Right lobe of liver (tissue), 6 donors: ENCODE measurements at regions of chr15 and their contacts with region 1.

Region 1: GRCh38 chr15:67850995-67851571 is 11.2 kb upstream of the RNU6-1 start:
- DNase-seq: peak in 1 of 3 donors; percentile 43
- ATAC-seq: peak in 3 of 4 donors; percentile 59 to 90 (median 66)
- H3K4me3 ChIP-seq: no peak overlapping the region
- H3K27ac ChIP-seq: no peak overlapping the region
- H3K4me1 ChIP-seq: no peaks in the 10 kb centered on the region
- H3K27me3 ChIP-seq: no peaks in the 10 kb centered on the region
- CTCF ChIP-seq: no peak
- POLR2A ChIP-seq: no peak

Region 2: DNA sequence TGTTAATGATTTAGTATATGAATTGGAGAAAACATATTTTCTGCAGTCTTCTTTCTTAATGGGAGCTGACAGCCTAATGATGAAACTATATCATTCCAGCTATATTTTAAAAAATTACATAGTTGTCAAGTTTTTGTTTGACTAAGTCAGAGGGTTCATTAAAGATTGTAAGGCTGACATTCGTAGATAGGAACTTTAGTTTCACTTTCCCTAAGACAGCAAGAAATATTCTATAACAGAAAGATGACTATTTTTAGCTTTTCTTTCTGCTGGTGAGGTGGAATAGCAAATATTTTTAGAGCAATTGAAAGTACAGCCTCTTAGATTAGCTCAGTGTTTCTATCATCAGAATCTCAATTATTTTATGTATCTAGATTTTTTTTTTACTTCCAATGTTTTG is 263.3 kb after region 1 on chr15:
- intact Hi-C with region 1: no loop called
- DNase-seq: no peak
- ATAC-seq: peak; percentile 42 to 69 (median 59)
- H3K4me3 ChIP-seq: peak overlapping the region; percentile 13 to 43 (median 39)
- H3K27ac ChIP-seq: peak overlapping the region in 2 of 3 donors; percentile 59
- H3K4me1 ChIP-seq: peaks cover 0 to 18% (median 1%) of the 10 kb centered on the region in 4 donors
- H3K27me3 ChIP-seq: no peaks in the 10 kb centered on the region
- CTCF ChIP-seq: no peak
- POLR2A ChIP-seq: no peak

Region 3: GRCh38 chr15:68154923-68155559 is 304.0 kb after region 1 on chr15:
- intact Hi-C with region 1: loop called in 1 of 2 experiments (anchors 10 kb)
- DNase-seq: no peak
- ATAC-seq: peak; percentile 80 to 87 (median 82)
- H3K4me3 ChIP-seq: no peak overlapping the region
- H3K27ac ChIP-seq: no peak overlapping the region
- H3K4me1 ChIP-seq: peaks cover 0 to 5% (median 0%) of the 10 kb centered on the region in 4 donors
- H3K27me3 ChIP-seq: no peaks in the 10 kb centered on the region
- CTCF ChIP-seq: peak; percentile 75 to 88 (median 81)
- POLR2A ChIP-seq: no peak

Region 4: DNA sequence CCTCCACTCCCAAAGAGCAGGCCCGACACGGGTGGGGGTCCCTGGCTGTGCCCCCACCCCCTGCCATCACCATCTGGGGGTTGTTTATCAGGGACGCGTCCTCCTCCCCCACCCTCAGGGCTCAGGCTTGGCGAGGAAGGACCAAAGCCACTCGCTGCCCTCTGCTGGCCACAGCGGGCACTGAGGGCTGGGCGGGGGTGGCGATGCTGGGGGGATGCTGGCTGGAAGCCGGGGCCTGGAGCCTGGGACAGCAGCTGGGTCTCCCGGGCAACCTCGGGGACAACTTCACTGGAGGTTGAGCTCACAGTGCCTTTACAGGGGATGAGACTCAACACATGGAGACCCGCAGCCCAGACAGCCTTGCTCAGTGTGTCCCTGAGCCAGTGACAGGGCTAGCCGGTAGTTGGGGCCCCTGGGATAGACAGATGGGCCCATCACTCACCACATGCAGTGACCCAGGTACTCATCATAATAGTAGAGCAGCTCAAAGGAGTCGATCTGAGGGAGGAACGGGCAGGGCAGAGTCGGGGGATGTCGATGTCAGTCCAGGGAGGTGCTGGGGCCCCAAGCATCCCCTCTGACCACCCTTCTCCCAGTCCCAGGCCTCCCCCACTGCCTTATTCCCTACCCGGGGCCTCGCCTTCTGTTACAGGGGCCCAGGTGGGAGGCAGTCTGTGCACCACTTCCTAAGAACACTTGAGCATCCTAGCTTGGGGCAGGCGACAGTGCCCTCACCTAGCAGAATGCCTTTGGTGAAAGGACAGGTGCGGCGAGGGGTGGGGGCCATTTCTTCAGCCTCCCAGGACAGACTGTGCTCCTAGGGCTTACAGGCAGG is 360.0 kb after region 1 on chr15:
- intact Hi-C with region 1: no loop called
- DNase-seq: peak; percentile 57 to 67 (median 67)
- ATAC-seq: peak; percentile 48 to 64 (median 60)
- H3K4me3 ChIP-seq: no peak overlapping the region
- H3K27ac ChIP-seq: no peak overlapping the region
- H3K4me1 ChIP-seq: peaks cover 0 to 7% (median 1%) of the 10 kb centered on the region in 4 donors
- H3K27me3 ChIP-seq: no peaks in the 10 kb centered on the region
- CTCF ChIP-seq: peak; percentile 67 to 81 (median 76)
- POLR2A ChIP-seq: no peak